HepG2 (cell line): ENCODE measurements at regions of chr6 and their contacts with region 1.

Region 1: DNA sequence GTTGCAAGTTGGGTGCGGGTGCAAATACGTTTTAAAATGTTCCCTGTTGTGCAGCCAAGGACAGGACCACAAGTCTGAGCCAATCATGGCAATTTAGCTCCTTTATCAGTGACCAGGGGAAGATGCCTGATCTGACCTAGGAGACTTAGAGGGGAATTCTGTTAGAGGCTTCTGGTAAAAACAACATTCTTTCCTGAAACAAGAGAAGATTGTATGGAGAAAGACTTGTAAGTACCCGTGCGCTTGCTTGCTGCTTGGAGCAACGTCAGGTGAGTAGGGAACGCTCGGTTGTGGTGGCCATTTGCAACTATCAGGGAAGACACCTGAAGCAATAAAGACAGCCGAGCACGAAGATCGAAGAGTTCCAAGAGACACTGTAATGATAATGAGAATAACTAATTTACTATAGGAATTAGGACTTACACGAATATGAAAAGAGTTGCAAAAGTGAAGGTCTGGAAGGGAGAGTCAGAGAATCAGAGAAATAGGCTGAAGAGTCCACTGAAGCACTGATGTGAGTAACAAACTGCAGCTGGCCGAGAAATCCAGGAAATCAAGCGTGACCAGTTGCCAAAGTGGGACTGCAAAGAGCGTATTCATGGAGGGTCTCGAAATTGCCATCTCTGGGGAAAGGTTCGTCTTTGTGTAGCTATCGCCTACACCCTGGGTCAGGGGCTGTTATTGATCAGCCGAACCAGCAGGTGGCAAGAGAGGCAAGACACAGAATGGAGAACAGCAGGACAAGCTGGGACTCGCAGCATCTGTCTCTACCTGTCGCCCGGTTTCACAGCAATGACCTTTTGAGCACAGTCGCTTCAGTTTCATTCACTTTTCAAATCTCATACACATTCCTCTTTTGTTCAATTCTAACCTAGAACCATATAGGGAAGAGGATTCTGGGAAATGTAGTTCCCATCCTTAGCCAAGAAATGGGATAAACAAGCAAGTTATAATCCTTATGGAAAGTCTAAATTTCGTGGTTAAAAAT is 26.1 kb downstream of the LOC128125822 start:
- DNase-seq: peak; percentile 88
- ATAC-seq: peak; percentile 99
- H3K4me3 ChIP-seq: peak overlapping the region; percentile 70 to 80 (median 73)
- H3K27ac ChIP-seq: peak overlapping the region; percentile 26
- H3K4me1 ChIP-seq: peaks cover 20% of the 10 kb centered on the region
- H3K27me3 ChIP-seq: no peaks in the 10 kb centered on the region; a peak in 1 of 5 replicates
- CTCF ChIP-seq: peak; percentile 98
- EP300 ChIP-seq: no peak
- POLR2A ChIP-seq: peak; percentile 46 to 60; a peak in 3 of 4 replicates
- RAD21 ChIP-seq: peak; percentile 89

Region 2: DNA sequence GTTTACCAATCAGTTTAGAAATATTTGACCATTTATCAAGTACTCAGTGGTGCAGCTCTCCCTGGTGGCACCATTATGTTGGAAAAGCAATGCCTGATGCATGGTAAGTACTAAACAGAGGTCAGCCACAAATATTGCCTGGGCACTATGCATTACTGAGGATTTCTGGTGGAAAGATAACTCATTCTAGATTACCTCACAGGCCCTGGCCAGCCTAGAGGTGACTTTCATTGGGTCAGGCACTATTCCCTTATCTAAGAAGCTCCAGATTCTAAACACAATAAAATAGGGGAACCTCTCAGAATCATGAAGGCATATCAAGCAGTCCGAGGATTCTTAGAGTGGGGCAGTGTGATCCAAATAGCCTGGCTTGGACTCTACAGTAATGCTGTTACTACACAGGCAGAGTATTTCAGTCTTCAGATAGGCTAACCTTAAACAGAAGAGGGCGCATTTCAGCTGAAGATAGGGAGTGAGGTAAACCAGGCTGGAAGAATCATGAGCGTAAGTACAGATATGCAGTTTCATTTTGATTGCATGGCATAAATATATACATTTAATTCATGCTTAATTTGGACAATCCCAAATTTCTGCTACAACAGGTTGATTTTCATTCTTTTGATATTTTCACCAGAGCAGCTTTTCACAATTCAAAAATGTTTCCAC is 290.6 kb before region 1 on chr6:
- CTCF ChIA-PET with region 1: no interaction called
- POLR2A ChIA-PET with region 1: no interaction called
- in situ Hi-C with region 1: no loop called
- intact Hi-C with region 1: loop called (anchors 1 kb)
- DNase-seq: peak; percentile 72
- ATAC-seq: peak; percentile 100
- H3K4me3 ChIP-seq: peak overlapping the region in 1 of 3 experiments; percentile 2; a peak in 2 of 6 replicates
- H3K27ac ChIP-seq: no peak overlapping the region
- H3K4me1 ChIP-seq: peaks cover 18% of the 10 kb centered on the region
- H3K27me3 ChIP-seq: no peaks in the 10 kb centered on the region
- CTCF ChIP-seq: peak; percentile 84
- EP300 ChIP-seq: no peak
- POLR2A ChIP-seq: no peak
- RAD21 ChIP-seq: peak; percentile 73

Region 3: GRCh38 chr6:63492476-63492875 is 105.9 kb before region 1 on chr6:
- CTCF ChIA-PET with region 1: no interaction called
- POLR2A ChIA-PET with region 1: no interaction called
- in situ Hi-C with region 1: no loop called
- intact Hi-C with region 1: no loop called
- DNase-seq: no peak
- ATAC-seq: no peak
- H3K4me3 ChIP-seq: no peak overlapping the region
- H3K27ac ChIP-seq: no peak overlapping the region
- H3K4me1 ChIP-seq: peaks cover 24% of the 10 kb centered on the region
- H3K27me3 ChIP-seq: no peaks in the 10 kb centered on the region
- CTCF ChIP-seq: no peak
- EP300 ChIP-seq: no peak
- POLR2A ChIP-seq: no peak
- RAD21 ChIP-seq: no peak

Region 4: DNA sequence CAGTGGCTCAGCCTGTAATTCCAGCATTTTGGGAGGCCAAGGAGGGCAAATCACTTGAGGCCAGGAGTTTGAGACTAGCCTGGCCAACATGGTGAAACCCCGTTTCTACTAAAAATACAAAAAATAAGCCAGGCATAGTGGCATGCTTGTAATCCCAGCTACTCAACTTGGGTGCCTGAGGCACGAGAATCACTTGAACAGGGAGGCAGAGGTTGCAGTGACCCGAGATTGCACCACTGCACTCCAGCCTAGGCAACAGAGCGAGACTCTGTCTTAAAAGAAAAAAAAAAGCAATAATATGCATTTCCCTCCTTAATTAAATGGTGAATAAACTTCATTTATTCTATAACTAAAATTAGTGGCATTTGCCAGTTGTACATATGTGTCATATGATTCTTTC is 63.1 kb before region 1 on chr6:
- CTCF ChIA-PET with region 1: no interaction called
- POLR2A ChIA-PET with region 1: no interaction called
- in situ Hi-C with region 1: no loop called
- intact Hi-C with region 1: no loop called
- DNase-seq: no peak
- ATAC-seq: no peak
- H3K4me3 ChIP-seq: no peak overlapping the region
- H3K27ac ChIP-seq: no peak overlapping the region
- H3K4me1 ChIP-seq: peaks cover 25% of the 10 kb centered on the region
- H3K27me3 ChIP-seq: no peaks in the 10 kb centered on the region
- CTCF ChIP-seq: no peak
- EP300 ChIP-seq: no peak
- POLR2A ChIP-seq: no peak
- RAD21 ChIP-seq: no peak

Region 5: DNA sequence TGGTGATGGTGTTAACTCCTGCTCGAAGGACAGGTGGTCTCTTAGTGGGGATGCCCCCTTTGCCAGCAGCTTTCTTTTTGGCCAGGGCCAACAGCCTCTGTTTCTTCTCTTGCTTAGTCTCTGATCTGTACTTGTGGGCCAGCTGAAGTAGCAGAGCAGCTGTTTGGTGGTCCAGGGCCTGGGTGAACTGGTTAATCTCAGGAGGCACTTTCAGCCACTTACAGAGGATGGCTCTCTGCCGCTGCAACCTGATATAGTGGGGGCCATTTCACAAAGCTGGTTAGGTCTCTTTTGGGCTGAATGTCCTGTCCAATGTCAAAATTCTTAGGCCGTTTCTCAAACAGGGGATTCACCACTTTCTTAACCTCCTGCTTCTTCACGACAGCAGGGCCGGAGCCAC is 49.3 kb before region 1 on chr6:
- CTCF ChIA-PET with region 1: no interaction called
- POLR2A ChIA-PET with region 1: no interaction called
- in situ Hi-C with region 1: no loop called
- intact Hi-C with region 1: no loop called
- DNase-seq: no peak
- ATAC-seq: no peak
- H3K4me3 ChIP-seq: no peak overlapping the region
- H3K27ac ChIP-seq: no peak overlapping the region
- H3K4me1 ChIP-seq: peaks cover 15% of the 10 kb centered on the region
- H3K27me3 ChIP-seq: no peaks in the 10 kb centered on the region
- CTCF ChIP-seq: no peak
- EP300 ChIP-seq: no peak
- POLR2A ChIP-seq: no peak
- RAD21 ChIP-seq: no peak

Region 6: GRCh38 chr6:63635588-63636517 is 37.5 kb after region 1 on chr6 and contains the start of gene PHF3:
- CTCF ChIA-PET with region 1: no interaction called
- POLR2A ChIA-PET with region 1: interaction called, 12 read pairs
- in situ Hi-C with region 1: no loop called
- intact Hi-C with region 1: loop called (anchors 1 kb)
- DNase-seq: peak; percentile 91
- ATAC-seq: peak; percentile 91
- H3K4me3 ChIP-seq: peak within 1 kb of the TSS; percentile 93 to 96 (median 95)
- H3K27ac ChIP-seq: peak within 1 kb of the TSS; percentile 96
- H3K4me1 ChIP-seq: peaks cover 51% of the 10 kb centered on the region
- H3K27me3 ChIP-seq: no peaks in the 10 kb centered on the region; a peak in 1 of 5 replicates
- CTCF ChIP-seq: peak; percentile 62
- EP300 ChIP-seq: peak; percentile 39 to 62
- POLR2A ChIP-seq: peak; percentile 79 to 85
- RAD21 ChIP-seq: peak; percentile 82
- total RNA-seq, gene PHF3: 70.4 and 96.2 TPM in 2 replicates

Region 7: DNA sequence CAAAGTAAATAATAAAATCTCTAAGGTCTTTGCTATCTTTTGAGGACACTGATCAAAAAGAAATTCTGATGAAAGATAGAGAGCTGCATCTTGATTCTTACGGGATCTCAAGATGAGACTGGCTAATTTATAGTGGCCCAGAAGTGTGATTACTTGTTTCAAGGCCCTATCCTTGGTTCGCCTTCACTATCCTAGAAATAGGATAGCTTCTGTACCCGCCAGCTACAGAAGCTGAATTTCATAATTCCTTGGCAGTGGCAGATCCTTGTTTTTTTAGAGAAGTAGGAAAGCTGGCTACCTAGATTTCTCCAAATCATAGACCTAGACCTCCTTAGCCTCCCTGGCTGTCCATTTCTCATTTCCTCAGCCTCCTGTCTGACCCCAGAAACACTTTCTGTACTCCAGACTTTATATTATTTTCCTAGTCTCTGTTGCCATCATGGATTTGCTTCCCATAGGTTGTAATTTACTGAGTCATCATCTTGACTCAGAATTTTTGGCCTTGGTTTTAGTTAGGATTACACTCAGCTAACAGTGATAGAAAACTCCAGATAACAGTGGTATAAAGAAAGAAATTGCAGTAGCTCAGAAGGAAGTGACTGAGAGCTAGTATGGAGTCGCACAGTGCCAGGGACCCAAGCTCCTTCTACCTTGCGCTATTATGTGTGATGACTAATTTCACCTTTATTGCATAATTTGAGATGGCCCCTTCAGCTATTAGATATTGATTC is 65.0 kb after region 1 on chr6:
- CTCF ChIA-PET with region 1: no interaction called
- POLR2A ChIA-PET with region 1: no interaction called
- in situ Hi-C with region 1: no loop called
- intact Hi-C with region 1: no loop called
- DNase-seq: no peak
- ATAC-seq: peak; percentile 37; the same call in 1 of the 3 replicates
- H3K4me3 ChIP-seq: no peak overlapping the region
- H3K27ac ChIP-seq: no peak overlapping the region
- H3K4me1 ChIP-seq: peaks cover 24% of the 10 kb centered on the region
- H3K27me3 ChIP-seq: no peaks in the 10 kb centered on the region
- CTCF ChIP-seq: no peak
- EP300 ChIP-seq: no peak
- POLR2A ChIP-seq: no peak
- RAD21 ChIP-seq: no peak

Region 8: DNA sequence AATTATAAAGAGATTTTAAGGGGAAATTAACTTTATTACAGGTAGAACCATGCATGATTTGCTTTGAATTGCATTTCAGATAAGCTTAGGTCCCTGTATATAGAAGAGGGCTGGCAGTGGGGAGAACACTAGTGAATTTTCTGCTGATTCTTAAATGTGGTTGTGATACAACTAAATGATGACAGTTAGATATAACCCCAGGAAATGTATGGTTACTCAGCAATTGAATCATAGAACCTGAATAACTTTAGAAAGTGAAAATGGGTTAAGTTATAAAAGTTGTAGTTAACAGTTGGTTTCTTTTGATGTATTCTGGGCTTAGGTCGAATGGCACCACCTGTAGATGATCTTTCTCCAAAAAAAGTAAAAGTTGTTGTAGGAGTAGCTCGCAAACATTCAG is 107.4 kb after region 1 on chr6:
- CTCF ChIA-PET with region 1: no interaction called
- POLR2A ChIA-PET with region 1: no interaction called
- in situ Hi-C with region 1: no loop called
- intact Hi-C with region 1: loop called (anchors 5 kb)
- DNase-seq: no peak
- ATAC-seq: no peak
- H3K4me3 ChIP-seq: no peak overlapping the region
- H3K27ac ChIP-seq: no peak overlapping the region
- H3K4me1 ChIP-seq: peaks cover 23% of the 10 kb centered on the region
- H3K27me3 ChIP-seq: no peaks in the 10 kb centered on the region
- CTCF ChIP-seq: no peak
- EP300 ChIP-seq: no peak
- POLR2A ChIP-seq: no peak
- RAD21 ChIP-seq: no peak

Region 9: DNA sequence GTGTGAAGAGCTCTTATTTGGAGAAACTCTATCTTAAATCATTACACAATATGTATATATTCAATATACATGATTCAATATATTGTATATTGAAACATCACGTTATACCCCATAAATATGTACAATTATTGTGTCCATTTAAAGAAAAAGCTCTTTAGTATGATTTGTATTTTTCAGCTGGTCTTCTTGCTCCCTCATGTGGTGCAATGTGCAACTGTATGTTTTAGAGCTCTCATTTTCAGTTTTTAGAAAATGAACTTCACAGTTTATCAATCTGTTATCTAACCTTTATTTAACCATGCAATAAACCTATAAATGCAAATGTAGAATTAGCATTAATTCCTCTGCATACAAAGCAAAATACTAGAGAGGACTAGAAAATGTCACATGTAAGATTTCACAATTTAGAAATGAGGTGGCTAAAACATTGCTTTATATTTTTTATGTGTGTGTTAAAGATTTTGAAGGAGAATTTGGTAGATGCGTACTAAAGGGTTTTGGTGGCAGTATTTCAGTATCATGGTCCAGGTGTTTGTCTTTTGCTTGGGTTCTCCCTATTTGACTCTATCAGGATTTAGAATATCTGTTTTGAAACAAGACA is 204.4 kb after region 1 on chr6:
- CTCF ChIA-PET with region 1: interaction called, 5 read pairs
- POLR2A ChIA-PET with region 1: interaction called, 5 read pairs
- in situ Hi-C with region 1: no loop called
- intact Hi-C with region 1: loop called (anchors 1 kb)
- DNase-seq: peak; percentile 31
- ATAC-seq: no peak
- H3K4me3 ChIP-seq: no peak overlapping the region
- H3K27ac ChIP-seq: no peak overlapping the region
- H3K4me1 ChIP-seq: peaks cover 49% of the 10 kb centered on the region
- H3K27me3 ChIP-seq: no peaks in the 10 kb centered on the region
- CTCF ChIP-seq: peak; percentile 66
- EP300 ChIP-seq: no peak
- POLR2A ChIP-seq: no peak
- RAD21 ChIP-seq: peak; percentile 54; the same call in 1 of the 2 replicates